AG04449 (cell line): ENCODE measurements at regions of chr19 and their contacts with region 1.

Region 1: DNA sequence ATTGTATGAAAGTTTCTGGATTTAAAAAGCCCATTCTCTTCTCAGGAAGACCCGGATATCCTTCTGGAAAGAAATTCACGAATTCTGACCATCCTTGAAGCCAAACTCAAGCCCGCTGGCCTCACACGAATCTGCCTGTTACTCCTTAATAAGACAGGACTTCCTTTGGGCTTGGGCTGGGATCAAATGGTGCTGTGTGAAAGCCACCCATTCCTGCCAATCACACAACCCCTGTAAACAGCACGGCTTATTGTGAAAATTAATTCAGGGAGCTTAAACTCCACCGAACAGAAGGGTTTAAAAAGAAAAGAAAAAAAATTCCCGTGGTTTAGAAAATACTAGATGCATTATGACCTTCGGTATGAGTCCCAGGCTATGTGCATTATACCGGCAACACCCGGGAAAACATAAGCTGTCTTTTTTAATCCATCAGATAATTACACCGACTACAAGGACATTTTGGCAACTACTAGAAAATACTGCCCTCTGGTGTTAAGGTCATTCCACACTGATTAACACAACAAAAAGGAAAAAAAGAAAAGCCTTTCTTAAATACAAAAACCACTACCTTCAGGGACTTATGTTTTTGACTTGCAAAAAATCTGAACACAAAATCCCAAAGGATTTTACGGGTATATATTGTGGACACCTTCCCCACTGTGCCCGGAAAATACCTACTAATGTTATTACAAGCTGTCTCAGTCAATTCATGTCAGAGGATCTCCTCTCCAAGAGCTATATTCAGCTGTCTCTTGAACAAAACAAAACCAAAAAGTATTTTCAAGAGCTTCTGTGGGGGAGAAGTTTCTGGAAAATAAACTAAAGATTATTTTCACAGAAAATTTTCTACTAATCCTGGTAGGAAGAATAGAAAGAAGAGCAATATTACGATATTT is 76.0 kb upstream of the LSM14A start:
- DNase-seq: no peak
- H3K4me3 ChIP-seq: no peak overlapping the region
- CTCF ChIP-seq: peak; percentile 24

Region 2: GRCh38 chr19:33778089-33778791 is 318.0 kb before region 1 on chr19:
- CTCF ChIA-PET with region 1: interaction called, 223 read pairs
- POLR2A ChIA-PET with region 1: no interaction called
- DNase-seq: no peak
- H3K4me3 ChIP-seq: no peak overlapping the region
- CTCF ChIP-seq: peak; percentile 99

Region 3: DNA sequence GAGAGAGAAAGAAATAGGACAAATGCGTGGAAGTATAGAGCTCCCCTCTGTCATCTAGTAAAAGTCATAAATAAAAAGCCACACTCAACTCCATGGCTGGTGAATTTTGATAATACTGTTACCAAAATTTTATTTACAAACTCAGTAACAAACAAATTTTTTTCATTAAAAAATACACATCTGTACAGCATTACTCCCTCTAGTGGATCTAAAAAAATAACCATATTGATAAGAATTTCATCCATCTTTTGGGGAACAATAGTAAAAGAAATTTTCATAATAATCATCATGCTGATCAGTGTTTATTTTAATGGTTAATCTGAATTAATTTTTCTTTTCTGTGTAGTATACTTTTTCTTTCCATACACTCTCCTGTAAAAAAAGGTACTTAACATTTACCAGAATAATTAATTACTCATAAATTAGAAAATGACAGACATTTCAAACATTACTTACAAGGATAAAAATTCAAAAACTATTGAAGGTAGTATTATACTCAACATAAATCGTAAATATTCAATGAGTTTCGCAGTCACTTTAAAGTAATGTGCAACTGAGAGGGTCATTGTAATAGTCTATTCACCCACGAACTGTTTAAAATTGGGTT is 97.4 kb before region 1 on chr19:
- CTCF ChIA-PET with region 1: interaction called, 17 read pairs
- POLR2A ChIA-PET with region 1: no interaction called
- DNase-seq: no peak
- H3K4me3 ChIP-seq: no peak overlapping the region
- CTCF ChIP-seq: no peak

Region 4: DNA sequence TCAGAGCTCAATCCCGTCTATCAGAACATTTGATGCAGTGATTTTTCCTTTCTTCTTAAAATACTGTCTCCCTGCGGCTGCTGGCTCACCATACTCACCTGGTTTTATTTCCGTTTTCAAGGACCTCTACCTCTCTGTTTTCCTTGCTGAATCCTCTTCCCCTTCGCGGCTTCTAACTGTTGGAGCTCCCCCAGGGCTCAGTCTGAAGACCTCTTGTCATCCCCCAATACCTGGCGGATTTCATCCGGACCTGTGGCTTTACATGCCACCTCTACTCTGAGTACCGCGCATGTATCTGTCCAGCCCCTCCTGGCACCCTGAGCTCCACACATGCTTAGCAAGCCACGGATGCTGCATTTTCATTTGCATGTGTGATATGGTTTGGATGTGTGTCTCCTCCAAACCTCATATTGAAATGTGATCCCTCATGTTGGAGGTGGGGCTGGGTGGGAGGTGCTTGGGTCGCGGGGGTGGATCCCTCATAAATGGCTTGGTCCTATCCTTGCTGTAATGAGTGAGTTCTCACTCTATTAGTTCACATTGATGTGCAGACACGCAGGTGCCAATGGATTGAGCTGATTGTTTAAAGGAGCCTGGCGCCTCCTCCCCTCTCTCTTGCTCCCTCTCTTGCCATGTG is 30.1 kb before region 1 on chr19:
- CTCF ChIA-PET with region 1: interaction called, 18 read pairs
- POLR2A ChIA-PET with region 1: no interaction called
- DNase-seq: no peak
- H3K4me3 ChIP-seq: no peak overlapping the region
- CTCF ChIP-seq: no peak

Region 5: GRCh38 chr19:34120846-34121639 is 24.8 kb after region 1 on chr19:
- CTCF ChIA-PET with region 1: interaction called, 19 read pairs
- POLR2A ChIA-PET with region 1: no interaction called
- DNase-seq: no peak
- H3K4me3 ChIP-seq: no peak overlapping the region
- CTCF ChIP-seq: peak; percentile 80

Region 6: DNA sequence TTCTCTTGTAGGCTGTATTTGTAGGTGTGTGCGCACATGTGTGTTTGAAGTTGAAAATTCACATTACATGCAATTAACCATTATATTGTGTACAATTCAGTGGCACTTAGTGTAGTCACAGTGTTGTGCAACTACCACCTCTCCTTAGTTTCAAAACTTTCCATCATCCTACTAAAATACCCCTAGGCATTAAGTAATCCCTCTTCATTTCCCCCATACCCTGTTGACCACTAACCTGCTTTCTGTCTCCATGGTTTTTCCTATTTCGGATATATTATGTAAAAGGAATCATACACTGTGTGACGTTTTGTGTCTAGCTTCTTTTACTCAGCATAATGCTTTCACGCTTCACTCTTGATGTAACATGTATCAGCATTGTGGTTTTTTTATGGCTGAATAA is 92.1 kb after region 1 on chr19:
- CTCF ChIA-PET with region 1: no interaction called
- POLR2A ChIA-PET with region 1: no interaction called
- DNase-seq: no peak
- H3K4me3 ChIP-seq: no peak overlapping the region
- CTCF ChIP-seq: no peak